HCT116 (cell line): ENCODE measurements at regions of chr4 and their contacts with region 1.

Region 1: DNA sequence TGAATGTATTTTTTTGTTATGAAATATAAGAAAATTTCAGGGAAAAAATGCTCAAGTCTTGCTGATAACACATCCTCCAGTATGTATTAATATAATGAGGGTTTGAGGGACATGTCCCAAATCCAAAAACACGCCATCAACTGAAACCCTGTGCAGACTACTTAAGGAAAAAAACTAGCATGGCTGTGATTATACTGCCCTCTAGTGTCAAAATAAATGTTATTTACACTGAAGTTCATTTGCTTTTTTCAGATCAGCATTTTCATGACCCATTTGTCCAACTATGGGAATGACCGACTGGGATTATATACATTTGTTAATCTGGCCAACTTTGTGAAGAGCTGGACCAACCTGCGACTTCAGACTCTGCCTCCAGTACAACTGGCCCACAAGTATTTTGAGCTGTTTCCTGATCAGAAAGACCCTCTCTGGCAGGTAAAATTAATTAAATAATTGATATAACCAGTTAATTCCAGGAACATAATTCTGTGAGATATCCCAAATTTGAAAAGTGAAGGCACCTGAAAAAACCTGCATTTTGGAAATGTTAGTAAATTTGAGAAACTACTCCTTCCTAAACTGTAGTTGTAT is 128.5 kb downstream of the PRSS12 start:
- DNase-seq: peak; percentile 67
- ATAC-seq: peak; percentile 80
- H3K4me3 ChIP-seq: no peak overlapping the region
- H3K27ac ChIP-seq: no peak overlapping the region
- H3K4me1 ChIP-seq: no peaks in the 10 kb centered on the region
- H3K27me3 ChIP-seq: no peaks in the 10 kb centered on the region
- CTCF ChIP-seq: peak; percentile 31 to 78 (median 65); a peak in 5 of 6 replicates
- POLR2A ChIP-seq: no peak
- RAD21 ChIP-seq: peak; percentile 83

Region 2: GRCh38 chr4:116849620-116850019 is 1374.7 kb before region 1 on chr4:
- CTCF ChIA-PET with region 1: no interaction called
- POLR2A ChIA-PET with region 1: no interaction called
- RAD21 ChIA-PET with region 1: no interaction called
- intact Hi-C with region 1: loop called (anchors 10 kb)
- DNase-seq: no peak
- ATAC-seq: 0 out of 2 replicates have a peak, but pooled peaks have one; percentile 36
- H3K4me3 ChIP-seq: no peak overlapping the region
- H3K27ac ChIP-seq: no peak overlapping the region
- H3K4me1 ChIP-seq: no peaks in the 10 kb centered on the region
- H3K27me3 ChIP-seq: no peaks in the 10 kb centered on the region
- CTCF ChIP-seq: peak in 2 of 3 experiments; percentile 14 to 38; a peak in 2 of 6 replicates
- POLR2A ChIP-seq: no peak
- RAD21 ChIP-seq: peak; percentile 45

Region 3: DNA sequence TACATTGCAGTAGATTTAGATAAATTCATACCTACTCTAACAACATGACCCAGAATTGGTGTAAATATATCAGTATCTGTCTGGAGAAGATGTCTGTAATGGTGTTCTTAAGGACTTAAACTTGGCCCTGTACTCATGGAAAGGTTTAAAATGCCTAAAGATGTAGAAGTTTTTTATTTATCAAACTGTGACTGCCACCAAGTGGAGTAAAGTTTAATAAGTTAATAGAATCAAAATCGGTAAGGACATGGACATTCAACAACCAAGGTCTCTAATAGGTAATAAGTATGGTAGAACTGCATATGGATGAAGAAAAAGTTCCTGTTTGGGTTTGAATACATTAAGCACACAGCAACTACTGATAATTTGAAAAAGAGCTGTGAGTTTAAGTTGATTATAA is 664.0 kb before region 1 on chr4:
- CTCF ChIA-PET with region 1: no interaction called
- POLR2A ChIA-PET with region 1: no interaction called
- RAD21 ChIA-PET with region 1: no interaction called
- intact Hi-C with region 1: loop called (anchors 10 kb)
- DNase-seq: peak; percentile 7
- ATAC-seq: 0 out of 2 replicates have a peak, but pooled peaks have one; percentile 25
- H3K4me3 ChIP-seq: no peak overlapping the region
- H3K27ac ChIP-seq: no peak overlapping the region
- H3K4me1 ChIP-seq: no peaks in the 10 kb centered on the region
- H3K27me3 ChIP-seq: no peaks in the 10 kb centered on the region
- CTCF ChIP-seq: peak; percentile 5 to 40 (median 15); a peak in 4 of 6 replicates
- POLR2A ChIP-seq: no peak
- RAD21 ChIP-seq: peak; percentile 57

Region 4: GRCh38 chr4:118034053-118034785 is 190.1 kb before region 1 on chr4 and contains the start of gene NDST3:
- CTCF ChIA-PET with region 1: interaction called, 3 read pairs
- POLR2A ChIA-PET with region 1: no interaction called
- RAD21 ChIA-PET with region 1: no interaction called
- intact Hi-C with region 1: loop called (anchors 2 kb)
- DNase-seq: peak; percentile 71
- ATAC-seq: peak; percentile 70
- H3K4me3 ChIP-seq: peak within 1 kb of the TSS; percentile 55 to 65
- H3K27ac ChIP-seq: peak within 1 kb of the TSS; percentile 56; the same call in 1 of the 2 replicates
- H3K4me1 ChIP-seq: peaks cover 5 to 12% of the 10 kb centered on the region in 2 experiments
- H3K27me3 ChIP-seq: no peaks in the 10 kb centered on the region
- CTCF ChIP-seq: peak; percentile 57 to 73 (median 63); a peak in 5 of 6 replicates
- POLR2A ChIP-seq: no peak
- RAD21 ChIP-seq: peak; percentile 91
- total RNA-seq, gene NDST3: not detected

Region 5: GRCh38 chr4:118076958-118077766 is 147.2 kb before region 1 on chr4:
- CTCF ChIA-PET with region 1: interaction called, 4 read pairs
- POLR2A ChIA-PET with region 1: no interaction called
- RAD21 ChIA-PET with region 1: no interaction called
- intact Hi-C with region 1: loop called (anchors 1 kb)
- DNase-seq: peak; percentile 32
- ATAC-seq: peak; percentile 97
- H3K4me3 ChIP-seq: no peak overlapping the region
- H3K27ac ChIP-seq: no peak overlapping the region
- H3K4me1 ChIP-seq: peaks cover 0 to 3% of the 10 kb centered on the region in 2 experiments; a peak in 2 of 4 replicates
- H3K27me3 ChIP-seq: no peaks in the 10 kb centered on the region
- CTCF ChIP-seq: peak; percentile 34 to 74 (median 66); a peak in 4 of 6 replicates
- POLR2A ChIP-seq: no peak
- RAD21 ChIP-seq: peak; percentile 65